Thyroid gland (tissue), 4 donors: ENCODE measurements at regions of chr5 and their contacts with region 1.

Region 1: DNA sequence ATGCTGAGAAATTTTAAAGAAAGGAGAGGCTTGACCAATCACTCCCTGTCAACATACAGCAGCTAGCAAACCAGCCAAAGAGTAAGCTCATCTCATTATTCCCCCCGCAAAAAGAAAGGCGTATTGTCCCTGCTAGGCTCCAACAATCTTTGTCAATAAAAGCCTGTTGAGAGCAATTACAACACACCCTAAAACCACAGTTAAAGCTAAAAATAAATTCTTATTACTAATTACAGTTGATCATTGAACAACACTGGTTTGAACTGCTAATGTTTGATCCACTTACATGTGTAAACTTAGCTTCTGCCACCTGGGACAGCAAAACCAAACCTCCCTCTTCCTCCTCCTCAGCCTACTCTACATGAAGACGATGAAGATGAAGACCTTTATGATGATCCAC is 151.2 kb downstream of the TSSK1B start:
- DNase-seq: no peak
- H3K4me3 ChIP-seq: no peak overlapping the region
- H3K27ac ChIP-seq: no peak overlapping the region
- H3K4me1 ChIP-seq: peaks cover 0 to 6% of the 10 kb centered on the region in 2 donors
- H3K27me3 ChIP-seq: no peaks in the 10 kb centered on the region
- CTCF ChIP-seq: no peak
- POLR2A ChIP-seq: no peak

Region 2: GRCh38 chr5:113005454-113005853 is 278.1 kb before region 1 on chr5:
- intact Hi-C with region 1: no loop called
- DNase-seq: no peak
- H3K4me3 ChIP-seq: no peak overlapping the region
- H3K27ac ChIP-seq: no peak overlapping the region
- H3K4me1 ChIP-seq: no peaks in the 10 kb centered on the region
- H3K27me3 ChIP-seq: no peaks in the 10 kb centered on the region
- CTCF ChIP-seq: no peak
- POLR2A ChIP-seq: no peak

Region 3: GRCh38 chr5:113166852-113167366 is 116.6 kb before region 1 on chr5:
- intact Hi-C with region 1: no loop called
- DNase-seq: no peak
- H3K4me3 ChIP-seq: no peak overlapping the region
- H3K27ac ChIP-seq: no peak overlapping the region
- H3K4me1 ChIP-seq: no peaks in the 10 kb centered on the region
- H3K27me3 ChIP-seq: no peaks in the 10 kb centered on the region
- CTCF ChIP-seq: no peak
- POLR2A ChIP-seq: no peak

Region 4: GRCh38 chr5:113201715-113202114 is 81.8 kb before region 1 on chr5:
- intact Hi-C with region 1: no loop called
- DNase-seq: no peak
- H3K4me3 ChIP-seq: no peak overlapping the region
- H3K27ac ChIP-seq: no peak overlapping the region
- H3K4me1 ChIP-seq: peaks cover 0 to 11% of the 10 kb centered on the region in 2 donors
- H3K27me3 ChIP-seq: no peaks in the 10 kb centered on the region
- CTCF ChIP-seq: no peak
- POLR2A ChIP-seq: no peak

Region 5: GRCh38 chr5:113212244-113212920 is 71.2 kb before region 1 on chr5:
- intact Hi-C with region 1: loop called (anchors 10 kb)
- DNase-seq: peak; percentile 75 to 81
- H3K4me3 ChIP-seq: no peak overlapping the region
- H3K27ac ChIP-seq: no peak overlapping the region
- H3K4me1 ChIP-seq: no peaks in the 10 kb centered on the region
- H3K27me3 ChIP-seq: no peaks in the 10 kb centered on the region
- CTCF ChIP-seq: no peak
- POLR2A ChIP-seq: no peak

Region 6: DNA sequence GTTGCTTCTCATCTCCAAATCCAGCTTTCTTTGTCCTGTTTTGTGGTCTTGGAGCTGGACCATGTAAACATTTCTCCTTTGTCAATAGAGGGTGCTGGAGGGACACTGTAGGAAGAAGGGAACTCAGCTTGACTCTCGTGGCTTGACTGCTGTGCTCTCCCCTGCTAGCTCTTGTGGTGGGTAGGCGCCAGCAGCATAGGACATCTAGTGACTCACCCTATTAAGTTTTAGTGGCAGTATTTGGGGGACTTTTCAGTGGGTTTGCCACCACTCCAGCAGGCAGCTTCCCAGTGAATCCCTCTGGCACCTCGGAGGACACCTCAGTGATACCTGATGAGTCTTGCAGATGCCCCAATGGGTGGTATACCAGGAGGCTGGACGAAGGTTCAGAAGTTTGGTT is 53.4 kb after region 1 on chr5:
- intact Hi-C with region 1: no loop called
- DNase-seq: no peak
- H3K4me3 ChIP-seq: no peak overlapping the region
- H3K27ac ChIP-seq: no peak overlapping the region
- H3K4me1 ChIP-seq: peaks cover 0 to 5% of the 10 kb centered on the region in 2 donors
- H3K27me3 ChIP-seq: no peaks in the 10 kb centered on the region
- CTCF ChIP-seq: peak in 1 of 6 experiments; percentile 7
- POLR2A ChIP-seq: no peak